ENCODE measurements at regions of chr17 and their contacts with region 1.

Region 1: DNA sequence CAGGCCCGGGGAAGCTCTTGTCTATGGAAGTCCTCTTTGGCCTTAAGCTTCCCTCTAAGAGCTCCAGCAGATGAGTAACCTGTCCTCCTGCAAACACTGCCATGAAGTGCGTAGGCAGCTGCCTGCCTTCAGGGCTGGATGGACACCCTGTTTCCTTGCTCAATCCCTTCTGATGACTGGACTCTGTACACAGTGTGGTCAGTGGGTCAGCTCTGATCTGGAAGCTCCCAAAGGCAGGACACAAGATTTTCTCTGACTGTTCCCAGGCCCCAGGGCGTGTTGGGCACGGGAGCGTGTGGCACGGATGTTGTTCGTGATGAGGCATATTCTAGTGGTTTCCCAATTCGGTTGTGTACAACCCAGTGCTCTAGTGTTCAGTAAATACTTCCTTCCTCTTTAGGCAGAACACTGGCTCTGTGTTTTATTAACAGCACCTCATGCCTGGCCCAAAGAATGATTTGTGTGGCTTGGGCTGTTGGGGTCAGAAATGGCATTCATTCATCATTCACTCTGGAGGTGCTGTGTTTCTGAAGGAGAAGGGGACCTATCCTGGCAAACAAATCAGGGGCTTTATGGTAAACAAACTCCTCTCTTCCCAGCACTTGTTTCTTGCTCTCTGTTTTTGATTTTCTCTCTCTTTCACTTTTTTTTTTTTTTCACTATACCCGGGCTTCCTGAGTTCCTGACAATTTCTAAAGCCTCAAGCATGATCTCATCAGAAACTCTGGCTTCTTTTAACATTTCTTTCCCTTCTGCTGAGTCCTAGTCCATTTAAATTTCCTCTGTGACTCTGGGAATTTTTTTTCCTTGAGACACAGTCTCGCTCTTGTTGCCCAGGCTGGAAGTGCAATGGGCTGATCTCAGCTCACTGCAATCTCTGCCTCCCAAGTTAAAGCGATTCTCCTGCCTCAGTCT is 12.0 kb upstream of the RNF157 start:
- DNase-seq: peak; percentile 100
- H3K4me3 ChIP-seq: no peak overlapping the region
- H3K27ac ChIP-seq: peak overlapping the region; percentile 38
- H3K4me1 ChIP-seq: peaks cover 20% of the 10 kb centered on the region
- H3K27me3 ChIP-seq: no peaks in the 10 kb centered on the region
- CTCF ChIP-seq: no peak

Region 2: GRCh38 chr17:76204277-76204676 is 48.0 kb before region 1 on chr17:
- CTCF ChIA-PET with region 1: no interaction called
- dilution Hi-C with region 1: loop called (anchors 5 kb)
- in situ Hi-C with region 1: no loop called
- intact Hi-C with region 1: no loop called
- DNase-seq: peak; percentile 47
- H3K4me3 ChIP-seq: no peak overlapping the region
- H3K27ac ChIP-seq: no peak overlapping the region
- H3K4me1 ChIP-seq: peaks cover 9% of the 10 kb centered on the region
- H3K27me3 ChIP-seq: no peaks in the 10 kb centered on the region
- CTCF ChIP-seq: no peak

Region 3: GRCh38 chr17:76264755-76265596 is 12.7 kb after region 1 on chr17 and contains the start of gene UBALD2:
- CTCF ChIA-PET with region 1: no interaction called
- dilution Hi-C with region 1: no loop called
- in situ Hi-C with region 1: no loop called
- intact Hi-C with region 1: loop called (anchors 1 kb)
- DNase-seq: peak; percentile 100
- H3K4me3 ChIP-seq: peak within 1 kb of the TSS; percentile 71 to 81 (median 80)
- H3K27ac ChIP-seq: peak within 1 kb of the TSS; percentile 70
- H3K4me1 ChIP-seq: peaks cover 57% of the 10 kb centered on the region
- H3K27me3 ChIP-seq: no peaks in the 10 kb centered on the region
- CTCF ChIP-seq: no peak
- total RNA-seq, gene UBALD2: 5.7 to 54.7 TPM